Natural killer cell (primary cell): ENCODE measurements at regions of chr4 and their contacts with region 1.

Region 1: DNA sequence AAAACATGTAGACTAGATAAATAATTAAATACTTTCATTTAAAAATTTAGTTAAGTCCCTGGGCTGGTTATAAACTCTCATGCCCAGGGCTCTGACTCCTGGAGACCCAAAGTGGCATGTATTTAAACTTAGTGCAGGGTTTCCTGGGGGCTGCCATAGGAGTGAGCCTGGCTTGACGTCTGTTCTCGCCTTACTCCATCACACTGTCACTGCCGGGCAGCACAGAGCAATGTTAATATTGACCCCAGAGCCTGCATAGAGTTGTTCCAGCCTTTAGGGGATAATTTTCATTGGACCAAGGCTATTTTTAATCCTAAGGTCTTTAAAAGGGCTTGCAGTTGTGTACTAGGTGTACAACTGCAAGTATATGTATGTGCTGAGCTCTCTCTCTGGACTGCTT is 31.2 kb downstream of the KIAA0232 start:
- DNase-seq: no peak
- ATAC-seq: no peak
- H3K4me3 ChIP-seq: no peak overlapping the region
- H3K4me3 Mint-ChIP-seq: no peak overlapping the region
- H3K27ac ChIP-seq: no peak overlapping the region
- H3K27ac Mint-ChIP-seq: no peak overlapping the region
- H3K4me1 ChIP-seq: no peaks in the 10 kb centered on the region
- H3K4me1 Mint-ChIP-seq: peaks cover 32 to 72% of the 10 kb centered on the region in 2 donors
- H3K27me3 ChIP-seq: no peaks in the 10 kb centered on the region
- H3K27me3 Mint-ChIP-seq: no peaks in the 10 kb centered on the region
- CTCF ChIP-seq: no peak

Region 2: GRCh38 chr4:6795821-6796220 is 17.9 kb before region 1 on chr4:
- intact Hi-C with region 1: loop called (anchors 2 kb)
- DNase-seq: no peak
- ATAC-seq: no peak
- H3K4me3 ChIP-seq: no peak overlapping the region
- H3K4me3 Mint-ChIP-seq: no peak overlapping the region
- H3K27ac ChIP-seq: no peak overlapping the region
- H3K27ac Mint-ChIP-seq: peak overlapping the region; percentile 74 to 76
- H3K4me1 ChIP-seq: peaks cover 11% of the 10 kb centered on the region
- H3K4me1 Mint-ChIP-seq: peaks cover 70% of the 10 kb centered on the region in 2 donors
- H3K27me3 ChIP-seq: no peaks in the 10 kb centered on the region
- H3K27me3 Mint-ChIP-seq: no peaks in the 10 kb centered on the region
- CTCF ChIP-seq: no peak